H1 (cell line): ENCODE measurements at regions of chr2 and their contacts with region 1.

Region 1: DNA sequence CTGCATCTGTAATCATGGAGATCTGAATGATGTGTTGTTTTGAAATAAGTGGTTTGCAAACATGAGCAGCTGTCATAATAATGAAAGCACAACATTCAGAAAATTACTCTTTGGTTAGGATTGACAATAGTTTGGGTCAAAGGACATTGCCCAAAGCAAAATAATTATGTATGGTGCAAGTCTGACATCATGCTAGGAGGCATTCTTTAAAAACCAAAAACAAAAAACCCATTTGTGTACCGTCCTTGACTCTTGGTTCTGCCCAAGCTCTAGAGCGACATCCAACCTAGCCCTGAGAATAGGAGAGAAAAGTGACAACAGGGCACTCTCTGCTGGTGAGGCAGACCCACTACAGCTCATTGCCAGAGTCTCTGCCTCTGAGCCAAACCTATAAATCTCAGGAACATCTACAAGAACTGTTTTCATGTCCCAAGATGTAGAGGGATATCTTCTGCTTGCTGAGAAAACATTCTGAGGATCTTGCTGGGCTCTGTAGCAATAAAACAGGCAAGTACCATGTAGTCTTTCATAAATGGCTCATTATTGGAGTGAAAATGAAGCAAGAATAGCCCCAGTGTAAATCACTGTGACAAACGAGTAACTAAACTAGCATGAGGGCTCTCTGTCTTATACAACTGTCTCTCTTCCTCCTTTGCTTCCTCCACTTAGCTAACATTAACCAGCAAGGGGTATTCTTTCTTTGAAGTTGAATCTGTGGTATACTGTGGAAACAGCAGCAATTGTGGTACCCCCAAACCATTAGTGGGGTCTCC is 266.8 kb upstream of the CXCR4 start:
- DNase-seq: no peak
- H3K4me3 ChIP-seq: no peak overlapping the region
- H3K27ac ChIP-seq: no peak overlapping the region
- H3K4me1 ChIP-seq: no peaks in the 10 kb centered on the region
- H3K27me3 ChIP-seq: no peaks in the 10 kb centered on the region
- CTCF ChIP-seq: peak; percentile 69 to 87 (median 77)
- EP300 ChIP-seq: no peak
- POLR2A ChIP-seq: no peak
- RAD21 ChIP-seq: peak; percentile 92 to 95

Region 2: GRCh38 chr2:136255648-136256463 is 128.9 kb before region 1 on chr2:
- CTCF ChIA-PET with region 1: interaction called, 10 read pairs
- POLR2A ChIA-PET with region 1: no interaction called
- DNase-seq: no peak
- H3K4me3 ChIP-seq: no peak overlapping the region
- H3K27ac ChIP-seq: no peak overlapping the region
- H3K4me1 ChIP-seq: no peaks in the 10 kb centered on the region
- H3K27me3 ChIP-seq: no peaks in the 10 kb centered on the region
- CTCF ChIP-seq: no peak
- EP300 ChIP-seq: no peak
- POLR2A ChIP-seq: no peak
- RAD21 ChIP-seq: peak in 1 of 2 experiments; percentile 27; a peak in 2 of 4 replicates

Region 3: DNA sequence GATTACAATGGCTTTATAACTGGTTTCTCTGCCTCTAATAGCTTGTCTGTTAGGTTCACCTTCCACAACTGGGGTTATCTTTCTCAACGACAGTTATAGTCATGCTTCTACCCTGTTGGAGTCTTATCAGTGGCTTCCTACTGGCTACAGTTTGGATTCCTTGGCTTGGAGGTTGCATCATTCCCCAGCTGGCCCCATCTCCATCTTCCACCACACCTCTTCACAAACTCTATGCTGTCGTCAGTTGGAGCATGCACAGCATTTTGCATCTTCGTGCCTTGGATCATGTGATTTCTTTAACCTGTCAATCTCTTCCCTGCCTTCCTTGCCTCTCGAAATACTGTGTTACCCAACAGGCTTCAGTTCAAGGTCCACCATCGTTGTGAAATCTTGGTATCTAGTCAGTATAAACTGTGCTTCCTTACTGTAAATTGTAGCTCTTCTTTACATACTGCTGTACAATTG is 49.6 kb after region 1 on chr2:
- CTCF ChIA-PET with region 1: no interaction called
- POLR2A ChIA-PET with region 1: no interaction called
- DNase-seq: no peak
- H3K4me3 ChIP-seq: no peak overlapping the region
- H3K27ac ChIP-seq: no peak overlapping the region
- H3K4me1 ChIP-seq: peaks cover 0 to 9% (median under 1%) of the 10 kb centered on the region in 4 experiments; a peak in 3 of 7 replicates
- H3K27me3 ChIP-seq: no peaks in the 10 kb centered on the region
- CTCF ChIP-seq: no peak
- EP300 ChIP-seq: no peak
- POLR2A ChIP-seq: no peak
- RAD21 ChIP-seq: no peak

Region 4: GRCh38 chr2:136448986-136449780 is 64.5 kb after region 1 on chr2:
- CTCF ChIA-PET with region 1: no interaction called
- POLR2A ChIA-PET with region 1: no interaction called
- DNase-seq: no peak
- H3K4me3 ChIP-seq: no peak overlapping the region
- H3K27ac ChIP-seq: no peak overlapping the region
- H3K4me1 ChIP-seq: peaks cover 0 to 6% (median 3%) of the 10 kb centered on the region in 4 experiments; a peak in 3 of 7 replicates
- H3K27me3 ChIP-seq: no peaks in the 10 kb centered on the region
- CTCF ChIP-seq: no peak
- EP300 ChIP-seq: no peak
- POLR2A ChIP-seq: no peak
- RAD21 ChIP-seq: no peak

Region 5: GRCh38 chr2:136550181-136550580 is 165.5 kb after region 1 on chr2:
- CTCF ChIA-PET with region 1: no interaction called
- POLR2A ChIA-PET with region 1: no interaction called
- DNase-seq: no peak
- H3K4me3 ChIP-seq: no peak overlapping the region
- H3K27ac ChIP-seq: no peak overlapping the region
- H3K4me1 ChIP-seq: peaks cover 0 to 8% (median 4%) of the 10 kb centered on the region in 4 experiments; a peak in 3 of 7 replicates
- H3K27me3 ChIP-seq: no peaks in the 10 kb centered on the region
- CTCF ChIP-seq: no peak
- EP300 ChIP-seq: no peak
- POLR2A ChIP-seq: no peak
- RAD21 ChIP-seq: no peak

Region 6: GRCh38 chr2:137107904-137108303 is 723.2 kb after region 1 on chr2:
- CTCF ChIA-PET with region 1: no interaction called
- POLR2A ChIA-PET with region 1: no interaction called
- DNase-seq: no peak
- H3K4me3 ChIP-seq: no peak overlapping the region
- H3K27ac ChIP-seq: no peak overlapping the region
- H3K4me1 ChIP-seq: no peaks in the 10 kb centered on the region
- H3K27me3 ChIP-seq: no peaks in the 10 kb centered on the region
- CTCF ChIP-seq: no peak
- EP300 ChIP-seq: no peak
- POLR2A ChIP-seq: no peak
- RAD21 ChIP-seq: no peak